ENCODE measurements at regions of chr14 and their contacts with region 1.

Region 1: DNA sequence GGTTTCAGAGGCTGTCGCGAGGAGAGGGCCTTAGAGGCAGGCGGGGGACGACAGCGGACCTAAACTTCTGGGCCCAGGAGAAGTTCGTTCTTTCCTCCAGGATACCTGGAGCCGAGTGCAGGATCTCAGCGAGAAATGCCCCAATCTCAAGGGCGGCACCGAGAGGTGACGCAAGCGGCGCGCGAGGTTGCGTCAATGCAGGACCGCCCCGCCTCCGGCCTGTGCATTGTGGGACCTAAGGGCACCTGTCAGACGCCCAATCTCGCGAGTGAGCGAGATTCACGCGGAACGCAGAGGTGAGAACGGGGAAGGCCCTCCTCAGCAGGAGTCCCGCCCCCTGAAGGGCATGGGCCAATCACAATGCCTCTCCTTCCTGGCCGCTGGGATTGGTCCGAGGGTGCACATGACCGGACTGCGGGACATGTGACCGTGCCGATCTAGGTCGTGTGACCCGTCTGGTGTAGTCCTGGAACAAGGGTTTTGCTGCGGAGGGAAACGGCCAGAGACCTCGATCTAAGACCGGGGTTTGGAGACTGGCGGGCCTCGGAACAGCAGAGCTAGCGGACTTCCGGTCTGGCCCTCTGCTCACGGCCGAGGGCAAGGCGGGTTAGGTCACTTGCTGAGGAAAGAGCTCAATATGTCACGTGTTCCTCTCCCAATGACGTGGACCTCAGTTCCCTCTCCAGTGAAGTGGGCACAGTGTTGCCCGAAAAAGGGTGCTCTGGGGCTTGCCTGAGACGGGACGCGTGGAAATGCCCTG is 16.3 kb upstream of the DYNC1H1 start:
- DNase-seq: peak; percentile 100
- ATAC-seq: peak; percentile 95 to 99
- H3K4me3 ChIP-seq: peak overlapping the region; percentile 77 to 96 (median 89)
- H3K27ac ChIP-seq: peak overlapping the region; percentile 95 to 100 (median 99)
- H3K4me1 ChIP-seq: peaks cover 17 to 20% of the 10 kb centered on the region in 2 donors
- H3K27me3 ChIP-seq: no peaks in the 10 kb centered on the region
- CTCF ChIP-seq: peak in 2 of 5 experiments; percentile 9 to 36
- POLR2A ChIP-seq: peak; percentile 74 to 90

Region 2: DNA sequence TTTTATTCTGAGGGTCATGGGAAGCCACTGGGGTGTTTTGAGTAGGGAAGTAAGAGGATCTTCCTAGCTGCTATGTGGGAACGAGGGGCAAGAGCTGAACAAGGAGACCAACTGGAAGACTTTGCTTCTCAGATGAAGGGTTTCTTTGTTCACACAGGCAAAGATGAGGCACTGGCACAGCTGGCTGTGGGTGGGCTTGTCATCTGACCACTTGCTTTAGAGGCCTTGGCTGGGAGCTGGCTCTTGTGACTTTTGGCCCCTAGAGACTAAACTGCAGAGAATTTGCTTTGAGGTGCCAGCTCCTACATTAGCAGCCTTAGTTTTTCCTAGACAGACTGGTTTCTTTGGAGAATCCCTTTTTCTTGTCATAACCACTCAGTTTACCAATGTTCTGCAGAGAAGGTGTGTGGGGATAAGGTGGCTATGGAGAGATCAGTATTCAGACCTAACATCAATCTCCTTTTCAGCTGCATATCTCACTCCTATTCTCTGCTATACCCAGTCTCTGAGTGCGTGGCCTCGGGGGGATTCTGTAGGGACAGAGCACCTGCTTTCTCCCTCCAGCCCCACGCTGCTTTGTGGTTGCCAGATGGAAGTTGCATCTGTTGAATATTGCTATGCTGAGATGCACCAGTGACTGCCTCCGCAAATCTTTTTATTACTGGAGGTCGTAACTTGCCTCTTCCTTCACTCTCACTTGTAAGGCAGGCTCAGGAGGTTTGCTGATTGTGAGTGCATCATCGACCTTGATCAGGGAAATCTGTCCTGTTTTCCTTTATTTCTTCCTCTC is 173.9 kb before region 1 on chr14:
- in situ Hi-C with region 1: loop called (anchors 10 to 25 kb)
- intact Hi-C with region 1: no loop called
- DNase-seq: no peak
- ATAC-seq: no peak
- H3K4me3 ChIP-seq: no peak overlapping the region
- H3K27ac ChIP-seq: peak overlapping the region in 1 of 4 donors; percentile 16
- H3K4me1 ChIP-seq: peaks cover 18 to 31% of the 10 kb centered on the region in 2 donors
- H3K27me3 ChIP-seq: no peaks in the 10 kb centered on the region
- CTCF ChIP-seq: no peak
- POLR2A ChIP-seq: no peak

Region 3: DNA sequence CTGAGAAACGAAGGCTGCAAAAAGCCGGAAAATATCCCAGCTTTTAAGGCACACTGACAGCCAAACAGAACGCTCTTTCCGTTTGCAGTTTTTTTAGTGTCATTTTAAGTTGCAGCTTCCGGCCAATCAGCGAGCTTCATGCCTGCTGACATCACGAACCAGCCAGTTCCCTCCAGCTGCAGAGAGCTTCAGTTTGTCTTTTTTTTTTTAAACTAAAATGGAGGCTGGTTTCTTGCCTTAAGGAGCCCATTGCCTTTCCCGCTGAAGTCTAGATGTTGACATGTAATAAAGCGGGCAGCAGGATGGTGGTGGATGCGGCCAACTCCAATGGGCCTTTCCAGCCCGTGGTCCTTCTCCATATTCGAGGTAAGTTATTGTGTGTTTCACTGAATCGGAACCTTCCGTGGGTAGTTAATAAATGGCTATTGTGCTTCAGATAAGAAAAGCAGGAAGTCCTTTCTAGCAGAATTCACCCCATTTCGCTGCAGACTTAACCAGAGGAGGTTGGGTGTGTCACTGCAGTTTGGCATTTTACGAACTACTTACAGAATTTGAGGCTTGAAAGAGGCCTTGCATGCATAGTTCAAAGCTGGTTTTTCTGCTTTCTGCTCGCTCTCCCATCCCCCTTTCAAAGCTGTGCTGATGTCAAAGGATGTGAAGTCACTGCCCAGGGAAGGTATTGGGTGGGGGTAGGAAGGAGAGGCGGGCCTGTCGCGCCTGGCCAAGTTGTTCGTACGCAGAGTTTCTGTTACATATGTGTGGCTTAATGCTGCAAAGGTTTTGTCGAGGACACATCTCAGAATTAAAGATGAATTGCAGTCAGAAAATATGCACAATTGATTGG is 138.2 kb before region 1 on chr14:
- in situ Hi-C with region 1: no loop called
- intact Hi-C with region 1: loop called (anchors 1 kb)
- DNase-seq: peak; percentile 79 to 87
- ATAC-seq: peak; percentile 91 to 93
- H3K4me3 ChIP-seq: peak overlapping the region; percentile 67 to 82 (median 72)
- H3K27ac ChIP-seq: peak overlapping the region; percentile 91 to 96 (median 93)
- H3K4me1 ChIP-seq: peaks cover 43 to 50% of the 10 kb centered on the region in 2 donors
- H3K27me3 ChIP-seq: no peaks in the 10 kb centered on the region
- CTCF ChIP-seq: no peak
- POLR2A ChIP-seq: peak; percentile 44 to 74

Region 4: DNA sequence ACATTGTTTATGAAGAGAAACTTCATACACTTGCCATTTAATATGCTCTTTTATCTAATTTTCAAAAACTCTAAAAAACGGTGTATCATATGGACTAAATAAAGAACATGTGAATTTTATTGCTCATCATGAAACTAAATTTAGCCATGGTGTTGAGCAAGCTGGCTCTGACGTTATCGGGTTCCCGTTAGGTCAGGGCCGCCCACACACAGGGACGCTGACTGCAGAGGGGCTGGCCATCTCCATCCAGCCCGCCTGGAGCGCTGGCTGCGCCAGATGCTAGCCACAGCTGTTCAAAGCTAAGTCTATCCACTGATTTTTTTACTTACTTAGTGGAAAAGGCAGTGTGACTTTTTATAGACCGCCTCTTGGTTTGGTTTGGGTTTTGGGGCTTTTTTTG is 20.2 kb before region 1 on chr14:
- in situ Hi-C with region 1: no loop called
- intact Hi-C with region 1: loop called (anchors 1 kb)
- DNase-seq: peak; percentile 85 to 93
- ATAC-seq: peak; percentile 94
- H3K4me3 ChIP-seq: peak overlapping the region in 3 of 4 donors; percentile 20 to 38 (median 23)
- H3K27ac ChIP-seq: peak overlapping the region; percentile 77 to 84 (median 83)
- H3K4me1 ChIP-seq: peaks cover 22 to 27% of the 10 kb centered on the region in 2 donors
- H3K27me3 ChIP-seq: no peaks in the 10 kb centered on the region
- CTCF ChIP-seq: no peak
- POLR2A ChIP-seq: peak in 1 of 2 donors; percentile 29

Region 5: GRCh38 chr14:102055216-102055918 is 107.3 kb after region 1 on chr14:
- in situ Hi-C with region 1: no loop called
- intact Hi-C with region 1: no loop called
- DNase-seq: no peak
- ATAC-seq: no peak
- H3K4me3 ChIP-seq: no peak overlapping the region
- H3K27ac ChIP-seq: no peak overlapping the region
- H3K4me1 ChIP-seq: peaks cover 5 to 7% of the 10 kb centered on the region in 2 donors
- H3K27me3 ChIP-seq: no peaks in the 10 kb centered on the region
- CTCF ChIP-seq: no peak
- POLR2A ChIP-seq: no peak

Region 6: GRCh38 chr14:102116361-102117070 is 168.4 kb after region 1 on chr14:
- in situ Hi-C with region 1: no loop called
- intact Hi-C with region 1: no loop called
- DNase-seq: no peak
- ATAC-seq: no peak
- H3K4me3 ChIP-seq: no peak overlapping the region
- H3K27ac ChIP-seq: no peak overlapping the region
- H3K4me1 ChIP-seq: no peaks in the 10 kb centered on the region
- H3K27me3 ChIP-seq: no peaks in the 10 kb centered on the region
- CTCF ChIP-seq: no peak
- POLR2A ChIP-seq: no peak

Measured in gastrocnemius medialis (tissue), 4 donors.